Panc1 (cell line): ENCODE measurements at regions of chr6 and their contacts with region 1.

Region 1: GRCh38 chr6:62541502-62541901 is 255.5 kb upstream of the KHDRBS2 start:
- DNase-seq: no peak
- ATAC-seq: no peak
- H3K4me3 ChIP-seq: no peak overlapping the region
- H3K27ac ChIP-seq: no peak overlapping the region
- H3K4me1 ChIP-seq: no peaks in the 10 kb centered on the region
- H3K27me3 ChIP-seq: no peaks in the 10 kb centered on the region
- CTCF ChIP-seq: no peak

Region 2: GRCh38 chr6:62324834-62325233 is 216.7 kb before region 1 on chr6:
- CTCF ChIA-PET with region 1: no interaction called
- POLR2A ChIA-PET with region 1: no interaction called
- in situ Hi-C with region 1: no loop called
- intact Hi-C with region 1: loop called (anchors 5 kb)
- DNase-seq: no peak
- ATAC-seq: no peak
- H3K4me3 ChIP-seq: no peak overlapping the region
- H3K27ac ChIP-seq: no peak overlapping the region
- H3K4me1 ChIP-seq: no peaks in the 10 kb centered on the region
- H3K27me3 ChIP-seq: no peaks in the 10 kb centered on the region
- CTCF ChIP-seq: no peak

Region 3: DNA sequence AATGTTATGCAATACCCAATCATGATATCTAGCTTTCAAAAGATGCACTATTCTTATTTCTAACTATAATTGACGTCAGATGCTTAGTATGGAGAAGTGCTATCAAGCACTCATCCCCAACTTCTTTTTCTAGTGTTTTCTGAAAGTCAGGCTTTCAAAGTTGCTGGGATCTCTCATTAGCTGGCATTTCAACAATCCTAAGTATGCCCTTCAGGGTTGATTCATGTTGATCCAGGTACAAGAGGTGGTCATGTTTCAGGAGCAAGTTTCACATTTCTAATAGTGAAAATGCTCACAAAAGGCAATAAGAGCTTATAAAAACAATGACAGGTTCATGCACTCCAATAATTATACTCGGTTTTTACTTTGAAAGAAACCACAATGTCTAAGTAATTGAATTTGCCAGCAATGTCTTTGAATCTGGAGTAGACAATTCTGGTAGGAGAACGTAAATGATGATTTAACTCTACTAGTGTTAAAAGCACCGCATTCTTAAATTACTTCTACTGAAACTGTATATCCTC is 61.7 kb before region 1 on chr6:
- CTCF ChIA-PET with region 1: no interaction called
- POLR2A ChIA-PET with region 1: no interaction called
- in situ Hi-C with region 1: no loop called
- intact Hi-C with region 1: no loop called
- DNase-seq: no peak
- ATAC-seq: no peak
- H3K4me3 ChIP-seq: no peak overlapping the region
- H3K27ac ChIP-seq: no peak overlapping the region
- H3K4me1 ChIP-seq: no peaks in the 10 kb centered on the region
- H3K27me3 ChIP-seq: no peaks in the 10 kb centered on the region
- CTCF ChIP-seq: no peak

Region 4: GRCh38 chr6:62652692-62653328 is 111.3 kb after region 1 on chr6:
- CTCF ChIA-PET with region 1: no interaction called
- POLR2A ChIA-PET with region 1: no interaction called
- in situ Hi-C with region 1: no loop called
- intact Hi-C with region 1: no loop called
- DNase-seq: no peak
- ATAC-seq: no peak
- H3K4me3 ChIP-seq: no peak overlapping the region
- H3K27ac ChIP-seq: no peak overlapping the region
- H3K4me1 ChIP-seq: no peaks in the 10 kb centered on the region
- H3K27me3 ChIP-seq: no peaks in the 10 kb centered on the region
- CTCF ChIP-seq: no peak